Upper lobe of right lung (tissue), 1 donor: ENCODE measurements at regions of chr1 and their contacts with region 1.

Region 1: DNA sequence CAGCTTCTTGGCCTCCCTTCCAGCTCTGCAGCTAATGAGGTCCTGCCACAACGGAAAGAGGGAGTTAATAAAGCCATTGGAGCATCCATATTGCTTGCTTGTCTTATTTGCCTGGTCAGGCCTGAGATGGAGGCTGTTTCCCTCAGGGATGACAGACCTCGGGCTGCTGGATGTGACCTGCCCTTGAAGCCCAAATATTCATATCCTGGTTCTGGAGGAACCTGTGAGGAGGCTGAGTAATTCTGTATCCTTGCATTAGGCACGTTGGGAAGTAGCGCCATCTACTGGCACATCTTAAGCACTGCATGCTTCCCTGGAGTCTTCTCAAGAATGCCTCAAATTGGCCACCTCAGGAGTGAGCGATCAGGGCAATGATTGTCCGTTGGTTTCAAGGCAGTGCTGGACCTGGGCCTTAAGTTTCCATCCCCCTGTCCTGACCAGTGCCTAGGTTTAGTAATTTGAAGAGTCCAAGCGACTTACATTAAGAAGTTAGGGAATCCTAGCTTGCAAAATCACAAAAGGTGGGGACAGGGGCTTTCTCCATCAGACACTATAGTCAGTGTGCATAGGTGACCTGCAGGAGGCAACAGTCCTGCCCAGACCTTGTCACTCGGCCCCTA is 13.8 kb upstream of the NASP start:
- DNase-seq: no peak
- ATAC-seq: peak; percentile 97
- H3K4me3 ChIP-seq: no peak overlapping the region
- H3K27ac ChIP-seq: no peak overlapping the region
- H3K4me1 ChIP-seq: peaks cover 8% of the 10 kb centered on the region
- H3K27me3 ChIP-seq: no peaks in the 10 kb centered on the region
- CTCF ChIP-seq: peak; percentile 99

Region 2: DNA sequence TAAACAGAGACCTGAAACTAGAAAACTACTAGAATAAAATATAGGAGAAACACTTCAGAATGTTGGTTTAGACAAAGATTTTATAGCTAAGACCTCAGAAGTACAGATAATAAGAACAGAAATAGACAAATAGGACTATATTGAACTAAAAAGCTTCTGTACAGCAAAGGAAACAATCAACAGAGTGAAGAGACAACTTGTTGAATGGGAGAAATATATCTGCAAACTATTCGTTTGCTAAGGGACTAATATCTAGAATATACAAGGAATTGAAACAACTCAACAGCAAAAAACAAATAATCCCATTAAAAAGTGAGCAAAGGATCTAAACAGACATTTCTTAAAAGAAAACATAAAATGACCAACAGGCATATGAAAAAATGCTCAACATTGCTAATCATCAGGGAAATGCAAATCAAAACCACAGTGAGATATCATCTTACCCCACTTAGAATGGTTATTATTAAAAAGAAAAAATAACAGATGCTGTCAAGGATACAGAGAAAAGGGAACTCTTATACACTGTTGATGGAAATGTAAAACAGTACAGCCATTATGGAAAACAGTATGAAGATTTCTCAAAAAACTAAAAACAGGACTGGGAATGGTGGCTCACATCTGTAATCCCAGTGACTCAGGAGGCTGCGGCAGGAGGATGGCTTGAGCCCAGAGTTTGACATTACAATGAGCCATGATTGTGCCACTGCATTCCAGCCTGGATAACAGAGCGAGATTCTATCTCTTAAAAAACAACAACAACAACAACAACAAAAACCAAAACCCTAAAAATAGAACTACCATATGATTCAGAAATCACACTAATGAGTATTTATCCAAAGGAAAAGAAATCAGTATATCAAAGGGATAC is 326.4 kb before region 1 on chr1:
- intact Hi-C with region 1: no loop called
- DNase-seq: no peak
- ATAC-seq: no peak
- H3K4me3 ChIP-seq: no peak overlapping the region
- H3K27ac ChIP-seq: no peak overlapping the region
- H3K4me1 ChIP-seq: no peaks in the 10 kb centered on the region
- H3K27me3 ChIP-seq: no peaks in the 10 kb centered on the region
- CTCF ChIP-seq: no peak

Region 3: DNA sequence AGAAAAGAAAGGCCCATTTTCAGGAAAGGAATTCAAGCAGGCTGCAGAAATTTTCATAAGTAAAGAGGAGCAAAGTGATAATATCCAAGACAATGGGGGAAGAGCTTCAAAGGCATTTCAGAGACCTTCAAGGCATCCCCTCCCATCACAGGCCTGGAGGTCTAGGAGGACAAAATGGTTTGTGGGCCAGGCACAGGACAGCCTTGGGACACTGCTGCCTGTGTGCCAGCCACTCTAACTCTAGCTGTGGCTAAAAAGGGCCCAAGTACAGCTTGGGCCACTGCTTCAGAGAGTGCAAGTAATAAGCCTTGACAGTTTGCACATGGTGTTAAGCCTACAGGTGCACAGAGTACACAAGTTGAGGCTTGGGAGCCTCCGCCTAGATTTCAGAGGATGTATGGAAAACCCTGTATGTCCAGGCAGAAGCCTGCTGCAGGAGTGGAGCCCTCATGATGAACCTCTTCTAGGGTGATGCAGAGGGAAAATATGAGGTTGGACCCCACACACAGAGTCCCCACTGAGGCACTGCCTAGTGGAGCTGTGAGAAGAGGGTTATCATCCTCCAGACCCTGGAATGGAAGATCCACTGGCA is 311.9 kb before region 1 on chr1:
- intact Hi-C with region 1: no loop called
- DNase-seq: no peak
- ATAC-seq: no peak
- H3K4me3 ChIP-seq: no peak overlapping the region
- H3K27ac ChIP-seq: no peak overlapping the region
- H3K4me1 ChIP-seq: no peaks in the 10 kb centered on the region
- H3K27me3 ChIP-seq: no peaks in the 10 kb centered on the region
- CTCF ChIP-seq: no peak

Region 4: DNA sequence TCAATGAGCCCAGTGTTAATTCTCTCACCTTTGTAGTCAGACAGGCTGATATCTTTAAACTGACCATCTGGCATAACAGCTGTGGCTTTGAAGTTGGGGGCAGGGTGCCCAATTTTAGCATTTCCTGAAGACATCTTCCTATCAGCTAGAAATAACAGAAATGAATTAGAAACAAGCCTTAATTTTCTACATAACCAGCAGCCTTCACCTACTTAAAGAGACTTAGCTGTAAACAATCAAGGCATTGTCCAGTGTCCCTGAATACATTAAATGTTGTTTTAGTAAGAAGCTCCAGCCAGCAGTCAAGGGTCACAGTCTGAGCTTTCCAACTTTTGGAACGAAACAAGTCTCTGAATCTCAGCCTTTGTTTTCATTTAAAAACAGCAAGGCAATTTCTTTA is 51.2 kb before region 1 on chr1:
- intact Hi-C with region 1: loop called (anchors 5 kb)
- DNase-seq: no peak
- ATAC-seq: no peak
- H3K4me3 ChIP-seq: peak overlapping the region; percentile 29
- H3K27ac ChIP-seq: no peak overlapping the region
- H3K4me1 ChIP-seq: peaks cover 24% of the 10 kb centered on the region
- H3K27me3 ChIP-seq: no peaks in the 10 kb centered on the region
- CTCF ChIP-seq: no peak

Region 5: GRCh38 chr1:45913183-45913683 is 343.2 kb after region 1 on chr1:
- intact Hi-C with region 1: no loop called
- DNase-seq: no peak
- ATAC-seq: no peak
- H3K4me3 ChIP-seq: no peak overlapping the region
- H3K27ac ChIP-seq: no peak overlapping the region
- H3K4me1 ChIP-seq: no peaks in the 10 kb centered on the region
- H3K27me3 ChIP-seq: no peaks in the 10 kb centered on the region
- CTCF ChIP-seq: no peak